AG04449 (cell line): ENCODE measurements at regions of chr11 and their contacts with region 1.

Region 1: GRCh38 chr11:2151500-2152257 is 9.3 kb downstream of the INS start:
- DNase-seq: no peak
- H3K4me3 ChIP-seq: no peak overlapping the region
- CTCF ChIP-seq: peak; percentile 80

Region 2: DNA sequence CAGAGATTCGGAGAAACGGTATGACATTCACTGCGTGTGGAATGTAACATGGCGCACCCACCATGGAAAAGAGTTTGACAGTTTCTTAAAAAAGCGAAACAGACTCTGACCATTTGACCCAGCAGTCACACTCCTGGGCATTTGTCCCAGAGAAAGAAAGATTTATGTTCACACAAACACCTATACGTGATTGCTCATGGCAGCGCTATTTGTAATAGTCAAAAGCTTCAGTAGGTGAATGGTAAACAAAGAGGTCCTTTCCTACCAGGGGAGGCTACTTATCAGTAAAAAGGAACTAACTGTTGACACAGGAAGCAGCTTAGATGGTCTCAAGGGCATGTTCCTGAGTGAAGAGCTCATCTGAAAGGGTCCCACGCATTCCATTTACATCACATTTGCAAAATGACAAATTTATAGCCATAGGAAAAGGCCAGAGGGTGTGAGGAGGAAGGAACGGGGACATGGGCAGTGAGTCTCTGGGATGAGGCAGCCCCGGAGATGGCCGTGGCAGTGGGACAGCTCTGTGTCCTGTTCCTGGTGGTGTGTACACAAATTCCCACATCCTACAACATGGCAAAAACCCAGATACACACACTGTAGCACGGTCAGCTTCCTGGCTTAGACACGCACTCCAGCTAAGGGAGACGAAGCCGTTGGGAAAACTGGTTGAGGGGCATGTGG is 469.3 kb before region 1 on chr11:
- CTCF ChIA-PET with region 1: interaction called, 15 read pairs
- POLR2A ChIA-PET with region 1: no interaction called
- DNase-seq: no peak
- H3K4me3 ChIP-seq: no peak overlapping the region
- CTCF ChIP-seq: no peak

Region 3: DNA sequence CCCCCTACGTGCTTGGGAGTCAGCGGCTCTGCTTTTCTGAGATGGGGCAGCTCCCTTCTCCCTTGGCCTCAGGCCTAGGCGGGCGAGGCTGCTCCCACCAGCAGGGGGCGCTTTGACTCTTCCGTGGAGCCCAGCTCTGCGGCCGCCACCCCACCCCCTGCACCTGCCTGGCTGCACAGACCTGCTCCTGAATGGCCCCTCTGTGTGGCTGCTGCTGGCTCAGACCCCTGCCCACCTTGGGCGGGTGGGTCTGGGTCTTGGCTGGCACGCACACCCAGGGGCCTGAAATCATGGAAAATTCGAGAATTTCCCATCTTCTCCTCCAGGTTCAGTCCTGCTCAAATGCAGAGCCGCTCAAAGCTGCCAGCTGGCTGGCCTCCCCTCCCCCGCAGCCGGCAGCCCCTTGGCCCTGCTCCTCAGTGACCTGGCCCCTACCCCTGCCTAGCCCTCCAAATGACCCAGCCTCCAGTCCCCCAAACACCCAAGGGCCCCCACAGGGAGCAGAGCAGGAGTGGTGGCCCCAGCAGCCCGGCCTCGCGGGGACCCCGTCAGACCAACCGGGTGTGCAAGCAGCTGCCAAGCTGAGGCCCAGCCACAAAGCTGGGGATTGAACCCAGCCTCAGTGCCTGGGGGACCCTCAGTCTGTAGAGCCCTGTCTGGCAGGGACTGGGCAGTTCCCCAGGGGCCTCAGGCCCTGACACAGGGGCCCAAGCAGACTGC is 269.0 kb before region 1 on chr11:
- CTCF ChIA-PET with region 1: interaction called, 86 read pairs
- POLR2A ChIA-PET with region 1: no interaction called
- DNase-seq: no peak
- H3K4me3 ChIP-seq: no peak overlapping the region
- CTCF ChIP-seq: peak; percentile 95

Region 4: GRCh38 chr11:2002807-2003206 is 148.9 kb before region 1 on chr11:
- CTCF ChIA-PET with region 1: interaction called, 76 read pairs
- POLR2A ChIA-PET with region 1: no interaction called
- DNase-seq: no peak
- H3K4me3 ChIP-seq: no peak overlapping the region
- CTCF ChIP-seq: no peak

Region 5: DNA sequence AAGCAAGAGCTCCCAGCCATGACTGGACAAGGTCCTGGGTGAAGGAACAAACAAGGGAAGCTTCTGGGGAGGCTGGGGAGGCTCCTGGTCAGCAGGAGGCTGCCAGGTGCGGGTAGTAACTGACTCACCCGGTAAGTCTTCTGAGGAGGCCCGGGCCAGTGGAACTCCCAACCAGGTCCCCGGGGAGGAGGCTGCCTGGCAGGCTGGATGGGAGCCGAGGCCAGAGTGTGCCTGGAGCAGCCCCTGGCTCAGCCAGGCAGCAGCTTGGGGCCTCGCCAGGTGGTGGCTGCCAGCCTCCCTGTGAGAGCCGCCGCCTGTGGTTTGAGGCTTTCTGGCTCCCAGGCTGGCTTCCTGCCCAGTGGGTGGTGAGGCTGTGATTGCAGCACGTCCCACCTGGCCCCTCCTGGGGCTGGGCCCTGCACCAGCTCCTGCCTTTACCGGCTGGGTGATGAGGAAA is 58.7 kb before region 1 on chr11:
- CTCF ChIA-PET with region 1: interaction called, 53 read pairs
- POLR2A ChIA-PET with region 1: no interaction called
- DNase-seq: no peak
- H3K4me3 ChIP-seq: no peak overlapping the region
- CTCF ChIP-seq: no peak

Region 6: DNA sequence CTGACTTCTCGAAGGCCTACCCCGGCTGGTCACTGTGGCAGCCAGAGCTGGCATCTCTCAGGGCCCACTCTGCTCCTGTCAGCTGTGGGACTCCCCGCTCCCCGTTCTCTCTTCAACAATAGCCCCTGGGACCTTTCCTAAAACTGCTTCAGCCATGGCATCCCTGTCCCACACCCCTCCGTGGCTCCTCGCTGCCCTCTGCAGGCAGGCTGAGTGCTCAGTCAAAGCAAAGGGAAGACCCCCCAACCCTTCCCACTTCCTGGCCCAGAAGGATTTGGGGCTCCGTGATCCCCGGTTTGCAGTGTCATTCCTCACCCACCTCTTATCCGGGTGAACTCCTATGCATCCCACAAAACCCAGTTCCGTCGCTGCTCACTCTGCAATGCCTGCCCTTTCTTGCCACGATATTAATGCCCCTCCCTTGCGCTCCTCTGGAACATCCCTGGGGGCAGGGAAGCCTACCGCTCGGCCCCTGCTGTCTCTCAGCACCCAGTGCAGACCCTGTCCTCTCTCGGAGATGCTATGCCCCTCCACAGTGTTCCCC is 21.5 kb after region 1 on chr11:
- CTCF ChIA-PET with region 1: interaction called, 14 read pairs
- POLR2A ChIA-PET with region 1: no interaction called
- DNase-seq: no peak
- H3K4me3 ChIP-seq: no peak overlapping the region
- CTCF ChIP-seq: peak; percentile 46

Region 7: GRCh38 chr11:2325719-2326118 is 174.0 kb after region 1 on chr11:
- CTCF ChIA-PET with region 1: no interaction called
- POLR2A ChIA-PET with region 1: no interaction called
- DNase-seq: no peak
- H3K4me3 ChIP-seq: no peak overlapping the region
- CTCF ChIP-seq: no peak